Activated B cell treated with CpG ODN at 0.5 μM for 24 hours (primary cell): ENCODE measurements at regions of chr6 and their contacts with region 1.

Region 1: GRCh38 chr6:5260661-5261544 is at the starts of genes FARS2 and LYRM4:
- DNase-seq: peak; percentile 97
- ATAC-seq: peak; percentile 84
- H3K4me3 Mint-ChIP-seq: peak within 1 kb of the TSS; percentile 98
- H3K27ac Mint-ChIP-seq: peak within 1 kb of the TSS; percentile 100
- H3K4me1 Mint-ChIP-seq: peaks cover 27% of the 10 kb centered on the region
- H3K27me3 Mint-ChIP-seq: no peaks in the 10 kb centered on the region
- CTCF ChIP-seq: no peak
- total RNA-seq, gene FARS2: 28.2 and 32.7 TPM in 2 replicates
- total RNA-seq, gene LYRM4: 51.2 and 52.2 TPM in 2 replicates

Region 2: DNA sequence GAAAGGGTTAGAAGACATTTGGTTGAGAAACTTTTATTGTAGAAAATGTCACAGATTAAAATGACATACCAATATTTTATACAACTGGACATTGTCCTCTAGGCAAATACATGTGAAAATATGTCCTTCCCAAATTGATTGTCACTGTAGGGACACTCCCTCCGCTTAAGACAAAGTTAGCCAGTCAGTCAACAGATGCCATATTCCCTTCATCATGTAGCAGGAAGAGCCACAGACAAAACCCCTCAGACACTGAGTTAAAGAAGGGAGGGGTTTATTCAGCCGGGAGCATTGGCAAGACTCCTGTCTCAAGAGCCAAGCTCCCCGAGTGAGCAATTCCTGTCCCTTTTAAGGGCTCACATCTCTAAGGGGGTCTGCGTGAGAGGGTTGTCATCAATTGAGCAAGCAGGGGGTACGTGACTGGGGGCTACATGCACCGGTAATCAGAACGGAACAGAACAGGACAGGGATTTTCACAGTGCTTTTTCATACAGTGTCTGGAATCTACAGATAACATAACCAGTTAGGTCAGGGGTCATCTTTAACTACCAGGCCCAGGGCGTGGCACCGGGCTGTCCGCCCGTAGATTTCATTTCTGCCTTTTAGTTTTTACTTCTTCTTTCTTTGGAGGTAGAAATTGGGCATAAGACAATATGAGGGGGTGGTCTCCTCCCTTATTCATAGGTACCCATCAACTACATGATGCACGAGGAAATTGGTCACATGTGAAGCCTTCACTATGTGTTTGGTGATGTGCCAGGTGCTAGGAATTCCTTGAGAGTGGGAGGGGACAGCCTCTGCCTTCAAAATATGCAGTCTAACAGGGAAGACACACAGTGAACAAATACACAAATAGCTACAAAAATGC is 640.4 kb before region 1 on chr6:
- CTCF ChIA-PET with region 1: no interaction called
- POLR2A ChIA-PET with region 1: no interaction called
- intact Hi-C with region 1: no loop called
- DNase-seq: no peak
- ATAC-seq: no peak
- H3K4me3 Mint-ChIP-seq: no peak overlapping the region
- H3K27ac Mint-ChIP-seq: no peak overlapping the region
- H3K4me1 Mint-ChIP-seq: no peaks in the 10 kb centered on the region
- H3K27me3 Mint-ChIP-seq: peaks cover 1% of the 10 kb centered on the region
- CTCF ChIP-seq: no peak

Region 3: GRCh38 chr6:5095236-5095635 is 165.7 kb before region 1 on chr6:
- CTCF ChIA-PET with region 1: no interaction called
- POLR2A ChIA-PET with region 1: no interaction called
- intact Hi-C with region 1: loop called (anchors 5 kb)
- DNase-seq: no peak
- ATAC-seq: peak; percentile 81
- H3K4me3 Mint-ChIP-seq: peak overlapping the region; percentile 44
- H3K27ac Mint-ChIP-seq: peak overlapping the region; percentile 66
- H3K4me1 Mint-ChIP-seq: peaks cover 49% of the 10 kb centered on the region
- H3K27me3 Mint-ChIP-seq: no peaks in the 10 kb centered on the region
- CTCF ChIP-seq: no peak

Region 4: GRCh38 chr6:5278047-5278446 is 17.1 kb after region 1 on chr6:
- CTCF ChIA-PET with region 1: no interaction called
- POLR2A ChIA-PET with region 1: interaction called, 25 read pairs
- intact Hi-C with region 1: loop called (anchors 1 kb)
- DNase-seq: no peak
- ATAC-seq: peak; percentile 84
- H3K4me3 Mint-ChIP-seq: peak overlapping the region; percentile 81
- H3K27ac Mint-ChIP-seq: peak overlapping the region; percentile 91
- H3K4me1 Mint-ChIP-seq: peaks cover 57% of the 10 kb centered on the region
- H3K27me3 Mint-ChIP-seq: no peaks in the 10 kb centered on the region
- CTCF ChIP-seq: no peak

Region 5: DNA sequence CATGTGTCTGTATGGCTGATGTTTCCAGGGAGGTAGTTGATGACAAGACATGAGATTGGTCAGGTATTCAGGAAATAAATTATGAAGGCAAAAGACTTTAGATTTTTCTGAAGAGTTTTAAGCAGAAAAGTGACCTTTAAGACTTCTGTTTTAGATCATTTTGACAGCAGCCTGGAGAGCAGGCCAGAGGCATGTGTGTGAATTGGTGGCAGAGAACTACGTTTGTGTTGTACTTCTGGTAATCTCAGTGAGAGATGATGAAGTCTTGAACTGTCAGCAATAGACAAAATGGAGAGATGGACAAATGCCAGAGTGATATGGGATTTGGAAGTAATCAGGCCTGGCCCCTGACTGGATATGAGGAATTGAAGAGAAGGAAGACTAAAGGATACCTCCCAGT is 31.3 kb after region 1 on chr6:
- CTCF ChIA-PET with region 1: interaction called, 4 read pairs
- POLR2A ChIA-PET with region 1: interaction called, 11 read pairs
- intact Hi-C with region 1: no loop called
- DNase-seq: no peak
- ATAC-seq: no peak
- H3K4me3 Mint-ChIP-seq: no peak overlapping the region
- H3K27ac Mint-ChIP-seq: peak overlapping the region; percentile 46
- H3K4me1 Mint-ChIP-seq: peaks cover 61% of the 10 kb centered on the region
- H3K27me3 Mint-ChIP-seq: no peaks in the 10 kb centered on the region
- CTCF ChIP-seq: no peak

Region 6: DNA sequence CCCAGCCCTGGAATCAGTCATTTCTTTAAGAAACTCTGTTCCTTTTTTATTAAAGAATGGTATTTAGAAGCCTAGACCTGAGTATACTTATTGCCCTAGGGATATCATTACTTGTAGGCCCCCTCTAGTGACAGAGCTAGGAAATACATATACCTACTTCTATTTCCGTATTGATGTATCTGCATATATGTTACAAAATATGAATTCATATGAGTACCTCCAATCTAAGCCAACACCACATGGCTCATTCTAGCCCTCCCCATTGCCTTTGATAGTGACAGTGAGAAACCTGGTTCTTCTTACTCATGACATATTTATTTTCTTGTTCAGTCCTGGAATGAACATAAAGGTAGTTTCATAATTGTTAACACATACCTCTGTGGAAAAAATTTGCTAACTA is 137.6 kb after region 1 on chr6:
- CTCF ChIA-PET with region 1: no interaction called
- POLR2A ChIA-PET with region 1: no interaction called
- intact Hi-C with region 1: loop called (anchors 2 kb)
- DNase-seq: no peak
- ATAC-seq: peak; percentile 87
- H3K4me3 Mint-ChIP-seq: no peak overlapping the region
- H3K27ac Mint-ChIP-seq: no peak overlapping the region
- H3K4me1 Mint-ChIP-seq: peaks cover 2% of the 10 kb centered on the region
- H3K27me3 Mint-ChIP-seq: no peaks in the 10 kb centered on the region
- CTCF ChIP-seq: no peak

Region 7: DNA sequence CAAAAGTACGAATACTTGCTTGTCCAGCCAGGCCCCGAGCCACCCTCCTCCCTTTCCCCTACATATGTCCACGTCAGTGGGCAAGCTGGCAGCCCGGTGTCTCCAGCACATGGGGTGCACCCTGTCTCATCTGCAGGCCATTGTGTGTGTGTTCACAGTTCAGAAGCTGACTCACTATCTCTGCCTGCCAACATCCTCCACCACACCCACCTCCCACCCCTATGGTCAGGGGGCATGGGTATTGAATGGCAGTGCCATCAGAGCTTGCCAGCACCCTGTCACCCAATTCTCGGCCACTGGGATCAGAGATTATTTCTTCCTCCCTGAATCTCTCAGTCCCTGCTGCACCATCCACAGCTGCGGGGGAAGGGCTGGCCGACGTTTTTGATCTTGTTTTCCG is 196.1 kb after region 1 on chr6:
- CTCF ChIA-PET with region 1: no interaction called
- POLR2A ChIA-PET with region 1: no interaction called
- intact Hi-C with region 1: no loop called
- DNase-seq: no peak
- ATAC-seq: no peak
- H3K4me3 Mint-ChIP-seq: no peak overlapping the region
- H3K27ac Mint-ChIP-seq: no peak overlapping the region
- H3K4me1 Mint-ChIP-seq: peaks cover 19% of the 10 kb centered on the region
- H3K27me3 Mint-ChIP-seq: no peaks in the 10 kb centered on the region
- CTCF ChIP-seq: no peak

Region 8: GRCh38 chr6:5995949-5996713 is 735.2 kb after region 1 on chr6:
- CTCF ChIA-PET with region 1: no interaction called
- POLR2A ChIA-PET with region 1: no interaction called
- intact Hi-C with region 1: loop called (anchors 5 kb)
- DNase-seq: no peak
- ATAC-seq: no peak
- H3K4me3 Mint-ChIP-seq: peak overlapping the region; percentile 83
- H3K27ac Mint-ChIP-seq: peak overlapping the region; percentile 51
- H3K4me1 Mint-ChIP-seq: peaks cover 50% of the 10 kb centered on the region
- H3K27me3 Mint-ChIP-seq: peaks cover 80% of the 10 kb centered on the region
- CTCF ChIP-seq: no peak

Region 9: GRCh38 chr6:6331946-6332601 is 1071.2 kb after region 1 on chr6:
- CTCF ChIA-PET with region 1: no interaction called
- POLR2A ChIA-PET with region 1: no interaction called
- intact Hi-C with region 1: loop called (anchors 5 kb)
- DNase-seq: no peak
- ATAC-seq: peak; percentile 72
- H3K4me3 Mint-ChIP-seq: peak overlapping the region; percentile 81
- H3K27ac Mint-ChIP-seq: peak overlapping the region; percentile 100
- H3K4me1 Mint-ChIP-seq: peaks cover 48% of the 10 kb centered on the region
- H3K27me3 Mint-ChIP-seq: no peaks in the 10 kb centered on the region
- CTCF ChIP-seq: no peak